ENCODE measurements at regions of chr14 and their contacts with region 1.

Region 1: DNA sequence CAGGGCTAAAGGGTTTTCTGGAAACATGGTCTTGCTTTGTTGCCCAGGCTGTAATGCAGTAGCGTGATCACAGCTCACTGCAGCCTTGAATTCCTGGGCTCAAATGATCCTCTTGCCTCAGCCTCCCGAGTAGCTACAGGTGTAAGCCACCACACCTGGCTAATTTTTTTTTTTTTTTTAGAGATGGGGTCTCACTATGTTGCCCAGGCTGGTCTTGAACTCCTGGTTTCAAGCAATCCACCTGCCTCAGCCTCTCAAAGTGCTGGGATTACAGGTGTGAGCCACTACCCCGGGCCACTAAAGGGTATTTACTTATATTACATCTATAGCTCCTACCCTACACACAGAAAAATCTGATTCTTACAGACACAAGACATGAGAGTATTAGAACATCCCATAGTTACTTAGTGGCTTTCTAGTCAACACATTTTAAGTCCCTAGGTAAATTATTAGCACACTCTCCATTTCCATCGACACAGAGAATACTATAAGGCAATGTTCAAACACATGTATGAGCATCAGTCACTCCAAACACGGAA is 6.2 kb upstream of the DCAF11 start:
- DNase-seq: no peak
- H3K4me3 ChIP-seq: no peak overlapping the region
- H3K27ac ChIP-seq: peak overlapping the region; percentile 36 to 69 (median 48)
- H3K4me1 ChIP-seq: peaks cover 2 to 28% (median 11%) of the 10 kb centered on the region in 4 donors
- H3K27me3 ChIP-seq: no peaks in the 10 kb centered on the region
- CTCF ChIP-seq: no peak
- EP300 ChIP-seq: no peak
- POLR2A ChIP-seq: no peak

Region 2: GRCh38 chr14:24064091-24064749 is 44.2 kb before region 1 on chr14:
- in situ Hi-C with region 1: no loop called
- intact Hi-C with region 1: loop called (anchors 5 kb)
- DNase-seq: no peak
- H3K4me3 ChIP-seq: no peak overlapping the region
- H3K27ac ChIP-seq: no peak overlapping the region
- H3K4me1 ChIP-seq: peaks cover 6 to 37% (median 20%) of the 10 kb centered on the region in 4 donors
- H3K27me3 ChIP-seq: no peaks in the 10 kb centered on the region
- CTCF ChIP-seq: no peak
- EP300 ChIP-seq: no peak
- POLR2A ChIP-seq: no peak

Region 3: DNA sequence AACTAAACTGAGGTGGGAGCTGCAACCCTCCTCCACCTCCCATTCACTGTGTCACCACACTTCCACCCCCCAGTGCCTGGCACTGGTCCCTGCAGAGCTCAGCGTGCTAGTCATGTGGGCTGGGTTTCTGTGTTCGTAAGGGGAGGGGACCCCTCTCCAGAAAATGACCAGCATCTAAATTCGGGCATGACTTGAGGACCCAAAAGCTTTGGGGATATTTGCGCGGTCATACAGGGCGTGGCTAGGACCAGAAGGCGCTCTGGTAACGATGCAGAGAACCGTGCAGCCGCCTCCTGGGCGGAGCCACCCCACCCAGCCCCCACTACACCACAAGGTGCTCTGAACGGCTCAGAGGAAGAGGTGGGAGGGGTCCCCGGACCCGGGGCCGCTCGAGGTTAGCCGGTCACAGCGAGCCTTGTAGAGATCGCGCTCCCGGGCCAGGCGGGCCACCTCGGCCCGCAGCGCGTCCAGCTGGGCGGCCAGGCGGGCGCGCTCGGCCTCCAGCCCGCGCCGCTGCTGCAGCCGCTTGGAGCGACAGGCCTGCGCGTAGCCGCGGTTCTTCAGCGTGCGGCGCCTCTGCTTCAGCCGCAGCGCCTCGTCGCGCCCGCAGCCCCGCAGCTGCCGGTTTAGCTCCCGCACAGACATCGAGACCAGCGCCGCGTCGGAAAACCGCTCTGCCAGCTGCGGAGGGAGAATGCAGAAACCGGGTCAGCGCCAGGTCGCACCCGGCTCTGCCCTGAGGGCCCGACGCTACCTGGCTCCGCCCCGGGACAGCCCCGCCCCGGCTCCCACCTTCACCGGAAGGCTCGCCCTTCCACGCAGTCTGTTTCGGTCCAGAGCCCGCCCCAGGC is 27.3 kb before region 1 on chr14:
- in situ Hi-C with region 1: no loop called
- intact Hi-C with region 1: no loop called
- DNase-seq: peak; percentile 85
- H3K4me3 ChIP-seq: peak overlapping the region; percentile 45 to 72 (median 52)
- H3K27ac ChIP-seq: peak overlapping the region; percentile 69 to 92 (median 76)
- H3K4me1 ChIP-seq: peaks cover 0 to 17% (median 10%) of the 10 kb centered on the region in 4 donors
- H3K27me3 ChIP-seq: no peaks in the 10 kb centered on the region
- CTCF ChIP-seq: no peak
- EP300 ChIP-seq: no peak
- POLR2A ChIP-seq: peak; percentile 67

Region 4: DNA sequence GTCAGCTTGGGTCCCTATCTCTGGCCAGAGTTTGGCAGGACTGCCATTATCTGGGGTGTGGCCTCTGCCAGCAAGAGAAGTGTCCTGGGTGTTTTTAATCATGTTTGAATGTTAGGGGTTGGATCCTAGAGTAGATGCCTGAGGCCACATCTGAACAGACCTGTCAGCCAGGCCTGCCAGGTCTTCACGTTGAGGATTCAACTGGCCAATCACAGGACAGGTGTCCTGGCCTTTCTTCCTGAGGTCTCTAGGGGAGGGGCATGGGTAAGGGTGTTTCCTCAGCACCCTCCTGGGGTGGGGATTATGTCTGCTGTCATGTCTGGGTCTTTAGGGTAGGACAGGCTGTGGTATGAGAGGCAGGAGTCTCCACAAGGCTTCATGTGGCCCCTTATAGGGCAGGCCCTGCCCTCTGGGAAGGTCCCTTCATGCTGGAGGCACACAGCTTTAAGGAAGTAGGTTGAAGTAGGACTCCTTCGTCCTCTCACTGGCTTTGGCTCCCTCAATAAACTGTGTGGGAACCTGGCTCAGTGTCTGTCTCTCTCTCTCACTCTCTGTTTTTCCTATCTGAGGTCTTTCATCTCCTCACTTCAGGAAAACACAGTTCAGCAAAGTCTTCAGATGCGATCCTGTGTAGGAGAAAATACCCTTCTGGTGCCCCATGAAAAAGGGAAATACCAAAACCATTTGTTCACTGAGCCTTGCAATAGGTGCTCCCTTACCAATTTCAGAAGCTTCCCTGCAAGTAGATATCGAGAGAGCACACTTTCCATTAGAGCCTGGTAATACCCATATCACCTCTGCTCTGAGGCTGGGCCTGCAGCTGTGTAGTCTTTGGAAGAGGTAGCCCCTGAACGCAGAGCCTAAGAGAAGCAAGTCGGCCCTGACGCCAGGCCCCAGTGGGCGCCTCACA is 15.4 kb after region 1 on chr14:
- in situ Hi-C with region 1: no loop called
- intact Hi-C with region 1: no loop called
- DNase-seq: no peak
- H3K4me3 ChIP-seq: no peak overlapping the region
- H3K27ac ChIP-seq: no peak overlapping the region
- H3K4me1 ChIP-seq: no peaks in the 10 kb centered on the region
- H3K27me3 ChIP-seq: no peaks in the 10 kb centered on the region
- CTCF ChIP-seq: no peak
- EP300 ChIP-seq: no peak
- POLR2A ChIP-seq: no peak

Region 5: DNA sequence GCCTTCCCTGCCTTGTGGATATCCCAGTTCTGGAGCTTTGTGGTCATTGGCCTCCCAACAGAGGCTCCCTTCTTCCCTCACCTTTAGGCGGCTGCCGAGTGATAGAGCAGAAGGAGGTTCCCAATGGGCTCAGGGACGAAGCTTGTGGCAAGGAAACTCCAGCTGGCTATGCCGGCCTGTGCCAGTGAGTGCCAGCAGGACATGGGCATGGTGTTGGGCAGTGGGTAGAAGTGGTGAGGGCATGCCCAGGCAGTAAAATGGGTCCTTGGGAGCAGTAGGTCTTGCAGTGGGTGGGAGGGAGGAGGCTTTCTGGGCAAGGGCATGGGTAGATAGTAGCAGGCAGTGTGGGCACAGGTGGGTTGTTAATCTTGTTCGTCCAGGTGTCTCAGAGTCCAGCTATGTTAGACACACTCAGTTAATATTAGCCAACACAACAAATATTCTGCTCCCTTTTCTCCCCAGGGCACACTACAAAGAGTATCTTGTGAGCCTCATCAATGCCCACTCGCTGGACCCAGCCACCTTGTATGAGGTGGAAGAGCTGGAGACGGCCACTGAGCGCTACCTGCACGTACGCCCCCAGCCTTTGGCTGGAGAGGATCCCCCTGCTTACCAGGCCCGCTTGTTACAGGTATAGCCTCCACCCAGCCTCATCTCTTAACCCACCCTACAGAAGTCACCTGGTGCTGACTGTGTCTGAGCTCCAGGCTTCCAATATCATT is 51.5 kb after region 1 on chr14:
- in situ Hi-C with region 1: no loop called
- intact Hi-C with region 1: loop called (anchors 10 kb)
- DNase-seq: no peak
- H3K4me3 ChIP-seq: no peak overlapping the region
- H3K27ac ChIP-seq: peak overlapping the region; percentile 91 to 95 (median 94)
- H3K4me1 ChIP-seq: peaks cover 22 to 32% (median 24%) of the 10 kb centered on the region in 4 donors
- H3K27me3 ChIP-seq: no peaks in the 10 kb centered on the region
- CTCF ChIP-seq: no peak
- EP300 ChIP-seq: no peak
- POLR2A ChIP-seq: no peak

Measured in transverse colon (tissue), 4 donors.